HepG2 (cell line): ENCODE measurements at regions of chr16 and their contacts with region 1.

Region 1: GRCh38 chr16:9008601-9009260 is 45.0 kb upstream of the USP7 start:
- DNase-seq: peak; percentile 85
- ATAC-seq: peak; percentile 94
- H3K4me3 ChIP-seq: peak overlapping the region; percentile 57 to 78 (median 61)
- H3K27ac ChIP-seq: no peak overlapping the region
- H3K4me1 ChIP-seq: peaks cover 54% of the 10 kb centered on the region
- H3K27me3 ChIP-seq: peaks cover 2 to 8% of the 10 kb centered on the region in 2 experiments; a peak in 3 of 5 replicates
- CTCF ChIP-seq: peak; percentile 100
- EP300 ChIP-seq: peak in 1 of 2 experiments; percentile 26; a peak in 1 of 4 replicates
- POLR2A ChIP-seq: no peak
- RAD21 ChIP-seq: peak; percentile 100

Region 2: GRCh38 chr16:8855961-8856360 is 152.8 kb before region 1 on chr16:
- CTCF ChIA-PET with region 1: no interaction called
- POLR2A ChIA-PET with region 1: no interaction called
- in situ Hi-C with region 1: no loop called
- intact Hi-C with region 1: no loop called
- DNase-seq: no peak
- ATAC-seq: no peak
- H3K4me3 ChIP-seq: no peak overlapping the region
- H3K27ac ChIP-seq: no peak overlapping the region
- H3K4me1 ChIP-seq: peaks cover 30% of the 10 kb centered on the region
- H3K27me3 ChIP-seq: no peaks in the 10 kb centered on the region
- CTCF ChIP-seq: no peak
- EP300 ChIP-seq: no peak
- POLR2A ChIP-seq: peak in 1 of 2 experiments; percentile 8; a peak in 1 of 4 replicates
- RAD21 ChIP-seq: no peak

Region 3: DNA sequence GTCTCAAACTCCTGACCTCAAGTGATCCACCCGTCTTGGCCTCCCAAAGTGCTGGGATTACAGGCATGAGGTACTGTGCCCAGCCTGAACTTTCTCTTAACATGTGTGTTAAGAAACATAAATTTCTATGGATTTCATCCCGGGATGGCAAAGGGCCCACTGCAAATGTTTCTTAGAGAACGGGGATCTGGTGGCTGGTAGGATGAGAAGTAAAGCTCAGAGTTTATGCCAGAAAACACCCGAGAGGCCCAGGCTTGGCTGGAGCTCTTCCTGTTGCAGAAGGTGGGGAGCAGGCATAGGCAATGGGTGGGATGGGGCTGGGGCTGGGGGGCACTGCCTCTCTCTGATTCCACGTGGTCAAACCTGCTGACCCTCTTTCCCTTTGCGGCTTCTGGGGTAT is 134.3 kb before region 1 on chr16:
- CTCF ChIA-PET with region 1: no interaction called
- POLR2A ChIA-PET with region 1: no interaction called
- in situ Hi-C with region 1: no loop called
- intact Hi-C with region 1: no loop called
- DNase-seq: no peak
- ATAC-seq: no peak
- H3K4me3 ChIP-seq: no peak overlapping the region
- H3K27ac ChIP-seq: no peak overlapping the region
- H3K4me1 ChIP-seq: peaks cover 79% of the 10 kb centered on the region
- H3K27me3 ChIP-seq: peaks cover 0 to 8% of the 10 kb centered on the region in 2 experiments; a peak in 2 of 5 replicates
- CTCF ChIP-seq: no peak
- EP300 ChIP-seq: no peak
- POLR2A ChIP-seq: no peak
- RAD21 ChIP-seq: no peak

Region 4: DNA sequence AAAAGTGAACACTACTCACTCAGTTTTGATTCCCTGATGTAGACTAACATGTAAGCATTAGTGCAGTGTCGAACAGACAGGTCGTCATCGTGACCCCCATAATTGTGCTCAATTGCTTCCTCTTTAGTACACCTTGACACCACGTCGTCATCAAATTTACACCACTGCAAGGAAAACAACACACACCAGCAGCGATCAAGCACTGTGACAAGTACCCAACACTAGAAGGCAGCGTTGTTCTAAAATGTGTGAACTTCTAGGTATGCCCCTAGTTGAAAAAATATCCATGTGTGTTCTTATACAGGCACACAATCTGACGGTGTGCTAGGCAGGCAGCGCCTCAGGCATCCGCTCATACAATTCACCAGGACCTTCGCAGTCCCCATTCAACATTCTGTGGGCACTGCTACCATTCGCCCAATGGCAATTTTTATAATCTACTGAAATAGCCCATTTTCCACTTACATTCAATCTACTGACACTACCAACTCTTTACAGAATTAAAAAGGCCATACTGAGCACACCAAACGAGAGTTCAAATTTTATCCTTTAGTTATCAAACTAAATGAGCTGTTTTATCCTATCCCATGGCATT is 103.5 kb before region 1 on chr16:
- CTCF ChIA-PET with region 1: interaction called, 20 read pairs
- POLR2A ChIA-PET with region 1: no interaction called
- in situ Hi-C with region 1: no loop called
- intact Hi-C with region 1: loop called (anchors 1 kb)
- DNase-seq: peak; percentile 59
- ATAC-seq: peak; percentile 81
- H3K4me3 ChIP-seq: no peak overlapping the region
- H3K27ac ChIP-seq: no peak overlapping the region
- H3K4me1 ChIP-seq: no peaks in the 10 kb centered on the region
- H3K27me3 ChIP-seq: no peaks in the 10 kb centered on the region
- CTCF ChIP-seq: peak; percentile 78
- EP300 ChIP-seq: no peak
- POLR2A ChIP-seq: no peak; a peak in 1 of 4 replicates
- RAD21 ChIP-seq: peak; percentile 70

Region 5: GRCh38 chr16:8963825-8964441 is 44.8 kb before region 1 on chr16 and contains the start of gene USP7:
- CTCF ChIA-PET with region 1: interaction called, 3 read pairs
- POLR2A ChIA-PET with region 1: interaction called, 18 read pairs
- in situ Hi-C with region 1: no loop called
- intact Hi-C with region 1: loop called (anchors 2 kb)
- DNase-seq: peak; percentile 86
- ATAC-seq: peak; percentile 73
- H3K4me3 ChIP-seq: peak within 1 kb of the TSS; percentile 74 to 90 (median 82)
- H3K27ac ChIP-seq: peak within 1 kb of the TSS; percentile 74
- H3K4me1 ChIP-seq: peaks cover 55% of the 10 kb centered on the region
- H3K27me3 ChIP-seq: no peaks in the 10 kb centered on the region; a peak in 2 of 5 replicates
- CTCF ChIP-seq: no peak
- EP300 ChIP-seq: peak in 1 of 2 experiments; percentile 52; a peak in 1 of 4 replicates
- POLR2A ChIP-seq: peak; percentile 22 to 79; a peak in 2 of 4 replicates
- RAD21 ChIP-seq: peak; percentile 80; the same call in 1 of the 2 replicates
- total RNA-seq, gene USP7: 173 and 177 TPM in 2 replicates

Region 6: DNA sequence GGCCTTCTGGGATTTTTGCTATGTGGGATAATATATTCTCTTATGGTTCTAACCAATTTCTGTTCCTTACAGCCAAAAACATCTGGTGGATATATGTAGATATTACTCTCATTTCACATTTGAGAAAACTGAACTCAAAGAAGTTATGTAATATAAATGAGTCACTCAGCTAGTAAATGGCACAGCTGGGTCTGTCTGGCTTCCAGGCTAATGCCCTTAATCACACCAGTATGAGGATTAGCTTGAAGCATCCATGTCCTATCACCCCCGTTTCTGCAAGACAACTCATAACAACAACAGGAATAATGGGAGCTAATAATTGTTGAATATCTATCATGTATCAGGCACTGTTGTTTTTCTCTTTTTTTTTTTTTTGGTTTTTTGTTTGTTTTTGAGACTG is 10.6 kb before region 1 on chr16:
- CTCF ChIA-PET with region 1: no interaction called
- POLR2A ChIA-PET with region 1: interaction called, 19 read pairs
- in situ Hi-C with region 1: no loop called
- intact Hi-C with region 1: no loop called
- DNase-seq: no peak
- ATAC-seq: no peak
- H3K4me3 ChIP-seq: no peak overlapping the region
- H3K27ac ChIP-seq: no peak overlapping the region
- H3K4me1 ChIP-seq: peaks cover 54% of the 10 kb centered on the region
- H3K27me3 ChIP-seq: 0 out of 5 replicates have a peak, but pooled peaks cover 0 to 1% of the 10 kb centered on the region in 2 experiments
- CTCF ChIP-seq: no peak
- EP300 ChIP-seq: no peak
- POLR2A ChIP-seq: no peak
- RAD21 ChIP-seq: no peak

Region 7: DNA sequence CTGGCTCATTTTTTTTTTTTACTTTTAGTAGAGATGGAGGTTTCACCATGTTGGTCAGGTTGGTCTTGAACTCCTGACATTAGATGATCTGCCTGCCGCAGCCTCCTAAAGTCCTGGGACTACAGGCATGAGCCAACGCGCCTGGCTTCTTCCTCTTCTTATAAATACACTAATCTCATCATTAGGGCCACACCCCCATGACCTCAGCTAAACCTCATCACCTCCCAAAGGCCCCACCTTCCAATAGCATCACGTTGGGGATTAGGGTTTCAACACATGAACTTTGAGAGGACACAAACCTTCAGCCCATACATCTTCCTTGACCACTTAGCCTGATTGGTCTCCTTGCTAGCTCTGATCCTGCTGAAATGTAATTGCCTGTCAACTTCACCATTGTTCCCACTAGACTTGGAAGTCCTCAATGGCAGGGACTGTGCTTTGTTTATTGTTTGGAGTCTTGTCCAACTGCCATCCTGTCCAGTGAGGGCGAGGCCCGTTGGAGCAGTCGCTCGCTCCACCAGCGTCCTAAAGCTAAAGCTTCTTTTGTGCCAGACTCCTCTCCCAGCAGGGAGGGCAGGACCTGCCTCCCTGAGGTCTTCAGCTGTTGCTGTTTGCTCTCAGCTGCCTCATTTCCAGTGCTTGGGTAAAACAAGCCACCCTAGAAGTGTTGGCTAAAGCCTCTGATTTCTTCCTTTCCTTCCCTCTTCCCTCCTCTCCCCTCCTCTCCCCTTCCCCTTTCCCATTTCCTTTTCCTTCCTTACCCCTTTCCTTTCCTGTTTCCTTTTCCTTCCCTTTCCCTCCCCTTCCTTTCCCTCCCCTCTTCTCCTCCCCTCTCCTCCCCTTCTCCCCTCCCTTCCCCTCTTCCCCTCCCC is 168.1 kb after region 1 on chr16:
- CTCF ChIA-PET with region 1: no interaction called
- POLR2A ChIA-PET with region 1: no interaction called
- in situ Hi-C with region 1: no loop called
- intact Hi-C with region 1: no loop called
- DNase-seq: peak; percentile 55
- ATAC-seq: peak; percentile 63
- H3K4me3 ChIP-seq: no peak overlapping the region
- H3K27ac ChIP-seq: no peak overlapping the region
- H3K4me1 ChIP-seq: peaks cover 8% of the 10 kb centered on the region
- H3K27me3 ChIP-seq: peaks cover 2 to 16% of the 10 kb centered on the region in 2 experiments; a peak in 3 of 5 replicates
- CTCF ChIP-seq: no peak
- EP300 ChIP-seq: no peak
- POLR2A ChIP-seq: no peak
- RAD21 ChIP-seq: no peak